ENCODE measurements at regions of chr4 and their contacts with region 1.

Region 1: DNA sequence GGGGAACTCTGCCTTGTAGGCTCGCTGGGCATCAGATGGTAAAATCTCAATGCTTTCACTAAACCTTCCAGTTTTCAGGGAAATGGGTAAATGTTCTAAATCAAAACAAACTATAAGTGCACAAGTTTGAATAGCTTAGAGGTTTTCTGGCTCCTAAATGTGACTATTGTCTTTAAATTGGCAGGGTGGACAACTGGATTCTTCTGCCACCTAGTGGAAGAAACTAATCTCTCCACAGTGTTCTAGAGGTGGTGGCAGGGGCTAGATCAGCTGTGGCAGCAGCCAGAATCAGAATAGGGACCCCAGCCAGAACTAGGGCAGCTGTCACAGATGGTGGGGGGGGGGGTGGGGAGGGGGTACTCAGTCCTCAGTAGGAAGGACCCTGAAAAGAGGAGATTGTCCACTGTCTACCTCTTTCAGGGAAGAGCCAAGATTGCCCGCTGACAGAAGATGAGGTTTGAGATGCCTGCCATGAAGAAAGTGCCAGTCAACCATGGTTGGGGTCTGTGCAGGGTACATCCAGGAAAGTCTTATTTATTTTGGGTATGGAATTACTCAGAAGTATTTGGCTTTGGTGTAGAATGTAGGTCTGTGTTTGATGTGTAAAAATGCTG is 201.4 kb downstream of the CCNG2 start:
- DNase-seq: peak in 1 of 2 donors; percentile 21
- ATAC-seq: peak in 6 of 8 donors; percentile 42 to 77 (median 66)
- H3K4me3 ChIP-seq: no peak overlapping the region
- H3K27ac ChIP-seq: no peak overlapping the region
- H3K4me1 ChIP-seq: no peaks in the 10 kb centered on the region
- H3K27me3 ChIP-seq: peaks cover 0 to 5% (median 0%) of the 10 kb centered on the region in 7 donors
- CTCF ChIP-seq: peak; percentile 19 to 71 (median 60)

Region 2: GRCh38 chr4:77235289-77235854 is 123.0 kb before region 1 on chr4:
- intact Hi-C with region 1: loop called (anchors 1 to 5 kb)
- DNase-seq: no peak
- ATAC-seq: no peak
- H3K4me3 ChIP-seq: no peak overlapping the region
- H3K27ac ChIP-seq: no peak overlapping the region
- H3K4me1 ChIP-seq: no peaks in the 10 kb centered on the region
- H3K27me3 ChIP-seq: peaks cover 0 to 17% (median 3%) of the 10 kb centered on the region in 7 donors
- CTCF ChIP-seq: no peak

Region 3: GRCh38 chr4:77413766-77414165 is 55.3 kb after region 1 on chr4:
- intact Hi-C with region 1: no loop called
- DNase-seq: no peak
- ATAC-seq: no peak
- H3K4me3 ChIP-seq: no peak overlapping the region
- H3K27ac ChIP-seq: no peak overlapping the region
- H3K4me1 ChIP-seq: no peaks in the 10 kb centered on the region
- H3K27me3 ChIP-seq: peaks cover 0 to 8% (median 0%) of the 10 kb centered on the region in 7 donors
- CTCF ChIP-seq: no peak

Measured in heart right ventricle (tissue), 16 donors.